Caco-2 (cell line): ENCODE measurements at regions of chr4 and their contacts with region 1.

Region 1: DNA sequence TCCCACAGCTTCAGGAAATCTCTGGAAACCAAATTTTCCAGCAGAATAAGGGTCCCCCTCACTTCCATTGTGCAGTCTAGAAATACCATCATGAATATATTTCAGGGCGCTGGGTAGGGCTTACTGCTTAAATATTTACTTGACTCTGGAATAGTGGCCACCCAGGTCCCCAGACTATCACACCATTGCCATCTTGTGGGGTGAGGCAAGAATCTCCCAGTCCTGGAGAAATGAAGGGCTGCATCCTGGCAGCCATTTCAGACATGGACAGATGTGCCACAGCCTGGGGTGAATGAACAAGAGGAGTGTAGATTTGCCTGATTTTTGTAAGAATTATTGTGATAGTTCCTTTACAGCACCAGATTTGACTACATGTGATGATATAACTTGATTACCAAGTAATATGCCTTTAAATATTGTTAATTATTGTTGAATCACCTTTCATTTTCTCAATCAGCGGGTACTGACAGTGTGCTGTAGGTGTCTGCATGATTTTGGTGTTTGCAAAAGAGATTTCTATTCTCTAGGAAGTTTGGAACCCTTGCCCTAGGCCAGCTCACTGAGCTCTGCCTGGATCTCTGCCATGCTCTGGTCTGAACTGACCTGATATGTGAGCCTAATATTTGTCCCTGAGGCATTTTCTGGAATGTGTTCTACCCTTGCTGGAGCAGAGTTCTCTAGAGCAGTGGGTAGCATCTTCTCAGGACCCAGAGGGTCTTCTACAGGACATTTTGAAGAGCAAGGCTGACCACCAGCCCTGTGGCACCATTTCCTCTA is 183.4 kb downstream of the KIT start:
- DNase-seq: peak in 1 of 2 experiments; percentile 20
- H3K4me3 ChIP-seq: no peak overlapping the region
- H3K4me3 Mint-ChIP-seq: no peak overlapping the region
- H3K27ac Mint-ChIP-seq: no peak overlapping the region
- H3K4me1 ChIP-seq: no peaks in the 10 kb centered on the region
- H3K4me1 Mint-ChIP-seq: no peaks in the 10 kb centered on the region
- H3K27me3 ChIP-seq: no peaks in the 10 kb centered on the region
- H3K27me3 Mint-ChIP-seq: peaks cover 5% of the 10 kb centered on the region
- CTCF ChIP-seq: peak; percentile 11 to 16

Region 2: GRCh38 chr4:54961357-54961975 is 120.3 kb after region 1 on chr4:
- CTCF ChIA-PET with region 1: no interaction called
- POLR2A ChIA-PET with region 1: no interaction called
- intact Hi-C with region 1: loop called (anchors 10 kb)
- DNase-seq: peak in 1 of 2 experiments; percentile 21
- H3K4me3 ChIP-seq: no peak overlapping the region
- H3K4me3 Mint-ChIP-seq: no peak overlapping the region
- H3K27ac Mint-ChIP-seq: no peak overlapping the region
- H3K4me1 ChIP-seq: no peaks in the 10 kb centered on the region
- H3K4me1 Mint-ChIP-seq: no peaks in the 10 kb centered on the region
- H3K27me3 ChIP-seq: 0 out of 2 replicates have a peak, but pooled peaks cover 1% of the 10 kb centered on the region
- H3K27me3 Mint-ChIP-seq: peaks cover 17% of the 10 kb centered on the region
- CTCF ChIP-seq: peak; percentile 22 to 55